ENCODE measurements at regions of chr19 and their contacts with region 1.

Region 1: DNA sequence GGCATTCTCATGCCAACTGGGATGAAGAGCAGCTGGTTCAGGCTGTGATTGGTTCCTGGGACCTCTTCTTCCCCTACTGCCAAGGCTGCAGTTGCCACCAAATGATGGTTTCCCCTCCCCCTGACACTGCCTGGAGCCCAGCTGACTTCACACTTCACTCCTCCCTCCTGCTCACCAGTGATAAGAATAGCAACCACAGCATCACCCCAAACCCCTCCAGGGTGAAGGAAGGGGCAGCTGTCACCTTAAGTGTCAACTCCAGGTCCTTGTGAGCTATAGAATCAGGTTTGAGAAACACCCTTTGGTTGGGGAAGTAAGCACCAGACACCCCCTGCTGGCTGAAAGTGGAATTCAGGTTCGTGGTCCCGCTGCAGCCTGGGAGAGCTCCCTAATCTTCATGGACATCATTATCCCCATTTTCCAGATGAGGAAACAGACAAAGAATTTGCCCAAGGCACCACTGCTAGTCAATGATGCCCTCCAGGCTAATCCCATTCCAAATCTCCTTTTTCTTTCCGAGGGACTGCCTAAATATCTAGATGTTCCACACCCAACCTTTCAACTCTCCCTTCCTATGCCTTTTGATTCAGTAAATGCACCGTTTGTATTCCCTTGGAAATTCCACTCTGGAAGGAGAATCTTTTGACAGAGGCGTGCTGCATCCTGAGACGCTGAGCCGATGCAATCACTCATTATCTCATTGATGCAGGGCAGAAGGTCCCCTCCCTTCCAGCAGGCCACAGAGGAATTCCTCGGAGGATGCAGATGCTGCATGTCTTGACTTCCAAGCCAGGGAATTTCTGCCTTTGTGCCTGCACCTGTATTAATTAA is 50.6 kb upstream of the UQCRFS1 start:
- DNase-seq: peak; percentile 34
- ATAC-seq: no peak

Region 2: GRCh38 chr19:28737021-28737895 is 526.3 kb before region 1 on chr19:
- intact Hi-C with region 1: loop called (anchors 5 kb)
- DNase-seq: no peak
- ATAC-seq: peak; percentile 52 to 68

Measured in left cardiac atrium (tissue), 4 donors.